ENCODE measurements at regions of chr3 and their contacts with region 1.

Region 1: DNA sequence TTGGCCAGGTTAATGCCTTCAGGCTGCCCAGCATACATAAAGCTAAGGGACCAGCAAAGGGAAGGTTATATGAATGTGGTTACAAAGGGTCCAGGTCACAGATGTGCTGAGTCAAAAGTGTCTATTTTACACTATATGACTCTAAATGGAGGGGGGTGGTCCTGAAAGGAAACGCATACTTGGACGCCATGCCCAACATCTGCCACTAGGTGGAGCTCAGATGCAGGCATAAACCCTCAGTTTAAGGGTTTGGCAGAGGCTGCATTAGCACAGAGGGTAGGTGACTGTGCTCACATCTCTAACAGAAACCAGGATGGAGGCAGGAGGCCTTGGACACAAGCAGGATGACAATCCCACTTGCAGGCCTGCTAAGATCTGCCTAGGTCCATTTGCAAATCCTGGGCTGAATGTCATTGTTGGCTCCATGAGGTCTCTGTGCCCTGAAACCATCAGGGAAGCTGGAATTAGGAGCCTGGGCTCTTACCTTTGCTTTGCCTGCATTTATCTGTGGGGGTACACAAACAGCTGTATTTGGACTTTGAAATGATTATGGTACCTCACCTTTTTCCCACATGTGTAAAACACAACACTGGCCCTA is 55.8 kb downstream of the ZNF621 start:
- DNase-seq: peak; percentile 31 to 57
- ATAC-seq: peak; percentile 82 to 88
- H3K4me3 ChIP-seq: no peak overlapping the region
- H3K27ac ChIP-seq: no peak overlapping the region
- H3K4me1 ChIP-seq: no peaks in the 10 kb centered on the region
- CTCF ChIP-seq: peak; percentile 80
- EP300 ChIP-seq: no peak
- POLR2A ChIP-seq: no peak
- RAD21 ChIP-seq: peak; percentile 85 to 92

Region 2: GRCh38 chr3:40566694-40567093 is 13.9 kb before region 1 on chr3:
- CTCF ChIA-PET with region 1: interaction called, 14 read pairs
- POLR2A ChIA-PET with region 1: no interaction called
- DNase-seq: no peak
- ATAC-seq: no peak
- H3K4me3 ChIP-seq: no peak overlapping the region
- H3K27ac ChIP-seq: no peak overlapping the region
- H3K4me1 ChIP-seq: no peaks in the 10 kb centered on the region
- CTCF ChIP-seq: no peak
- EP300 ChIP-seq: no peak
- POLR2A ChIP-seq: no peak
- RAD21 ChIP-seq: no peak

Region 3: GRCh38 chr3:40597441-40597840 is 16.8 kb after region 1 on chr3:
- CTCF ChIA-PET with region 1: interaction called, 13 read pairs
- POLR2A ChIA-PET with region 1: no interaction called
- DNase-seq: no peak
- ATAC-seq: no peak
- H3K4me3 ChIP-seq: no peak overlapping the region
- H3K27ac ChIP-seq: no peak overlapping the region
- H3K4me1 ChIP-seq: no peaks in the 10 kb centered on the region
- CTCF ChIP-seq: no peak
- EP300 ChIP-seq: no peak
- POLR2A ChIP-seq: no peak
- RAD21 ChIP-seq: no peak

Region 4: DNA sequence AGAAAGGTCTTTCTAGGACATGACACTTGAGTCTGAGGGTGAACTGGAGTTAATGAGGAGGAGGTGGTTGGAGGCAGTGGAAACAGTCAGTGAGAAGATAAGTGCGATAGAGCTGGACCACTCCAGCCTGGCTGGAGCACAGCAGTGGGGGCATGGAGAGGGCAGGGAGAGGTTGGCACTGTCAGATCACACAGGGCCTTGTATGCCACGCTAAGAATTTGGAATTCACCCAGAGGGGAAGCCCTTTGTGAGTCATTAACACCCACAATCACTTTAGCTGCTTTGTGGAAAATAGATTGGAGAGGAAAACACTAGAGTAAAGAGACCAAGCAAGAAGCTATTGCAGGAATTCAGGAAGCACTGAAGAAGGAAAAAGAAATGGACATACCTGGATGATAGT is 27.5 kb after region 1 on chr3:
- CTCF ChIA-PET with region 1: interaction called, 13 read pairs
- POLR2A ChIA-PET with region 1: no interaction called
- DNase-seq: no peak
- ATAC-seq: no peak
- H3K4me3 ChIP-seq: no peak overlapping the region
- H3K27ac ChIP-seq: no peak overlapping the region
- H3K4me1 ChIP-seq: no peaks in the 10 kb centered on the region
- CTCF ChIP-seq: no peak
- EP300 ChIP-seq: no peak
- POLR2A ChIP-seq: no peak
- RAD21 ChIP-seq: no peak

Region 5: DNA sequence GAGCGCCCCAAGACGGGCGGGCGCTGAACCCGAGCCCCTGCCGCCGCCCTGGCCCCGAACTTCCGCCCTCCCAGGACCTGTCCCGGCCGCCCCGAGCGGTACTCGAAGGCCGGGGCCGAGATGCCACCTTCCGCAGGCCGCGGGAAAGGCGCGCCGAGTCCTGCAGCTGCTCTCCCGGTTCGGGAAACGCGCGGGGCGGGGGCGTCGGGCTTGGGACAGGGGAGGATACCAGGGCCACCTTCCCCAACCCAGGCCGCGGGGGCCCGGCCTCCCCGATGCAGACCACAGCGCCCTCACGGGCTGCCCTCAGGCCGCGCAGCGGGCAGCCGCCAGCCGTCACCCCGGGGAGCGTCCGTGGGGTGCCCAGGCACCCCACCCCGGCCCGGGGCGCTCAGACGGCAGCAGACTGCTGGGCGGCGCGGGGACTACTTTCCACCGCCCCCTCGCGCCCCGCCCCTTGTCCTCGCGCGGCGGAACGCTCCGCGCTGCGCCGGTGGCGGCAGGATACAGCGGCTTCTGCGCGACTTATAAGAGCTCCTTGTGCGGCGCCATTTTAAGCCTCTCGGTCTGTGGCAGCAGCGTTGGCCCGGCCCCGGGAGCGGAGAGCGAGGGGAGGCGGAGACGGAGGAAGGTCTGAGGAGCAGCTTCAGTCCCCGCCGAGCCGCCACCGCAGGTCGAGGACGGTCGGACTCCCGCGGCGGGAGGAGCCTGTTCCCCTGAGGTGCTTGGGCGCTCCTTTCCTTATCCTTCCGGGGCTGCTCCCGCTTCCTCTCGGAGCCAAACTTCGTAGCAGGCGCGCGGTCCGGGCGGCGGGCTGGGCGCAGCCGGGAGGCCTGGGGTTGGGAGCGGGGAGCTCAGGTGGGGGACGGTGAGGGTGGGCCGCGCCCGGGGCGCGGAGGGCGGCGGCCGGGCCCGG is 618.6 kb after region 1 on chr3 and contains the start of gene CTNNB1:
- CTCF ChIA-PET with region 1: interaction called, 10 read pairs
- POLR2A ChIA-PET with region 1: interaction called, 6 read pairs
- DNase-seq: peak; percentile 33 to 94
- ATAC-seq: peak; percentile 81 to 89
- H3K4me3 ChIP-seq: peak within 1 kb of the TSS; percentile 95
- H3K27ac ChIP-seq: peak within 1 kb of the TSS; percentile 98 to 100
- H3K4me1 ChIP-seq: peaks cover 26% of the 10 kb centered on the region
- CTCF ChIP-seq: no peak
- EP300 ChIP-seq: peak in 1 of 2 experiments; percentile 6; a peak in 1 of 5 replicates
- POLR2A ChIP-seq: peak; percentile 84
- RAD21 ChIP-seq: peak; percentile 1 to 12; a peak in 2 of 5 replicates
- polyA plus RNA-seq, gene CTNNB1: 242 and 389 TPM in 2 replicates

Region 6: DNA sequence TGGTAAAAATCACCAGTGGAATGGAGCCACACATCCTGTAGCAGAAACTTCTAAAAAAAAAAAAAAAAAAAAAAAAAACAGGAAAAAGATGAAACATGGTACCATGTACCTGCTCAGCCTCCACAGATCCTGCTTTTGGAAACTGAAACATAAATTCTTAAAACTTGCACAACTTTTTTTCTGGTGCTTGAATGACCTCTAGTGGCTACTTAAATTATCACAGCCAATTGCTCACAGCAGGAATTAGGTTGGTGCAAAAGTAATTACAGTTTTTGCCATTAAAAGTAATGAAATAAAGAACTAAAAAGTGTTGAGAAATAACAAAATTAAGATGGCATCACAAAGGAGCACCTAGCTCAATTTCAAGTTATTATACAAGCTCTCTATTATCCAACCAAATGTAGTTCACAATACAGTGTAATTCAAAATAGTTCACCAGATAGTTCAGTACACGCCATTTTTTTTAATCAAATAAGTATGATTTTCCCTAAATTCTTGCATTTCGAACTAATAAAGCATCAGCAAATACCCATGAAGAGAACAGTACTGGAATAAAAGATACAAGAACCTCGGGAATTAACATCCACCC is 1300.7 kb after region 1 on chr3:
- CTCF ChIA-PET with region 1: interaction called, 86 read pairs
- POLR2A ChIA-PET with region 1: no interaction called
- DNase-seq: peak in 1 of 2 experiments; percentile 33
- ATAC-seq: no peak
- H3K4me3 ChIP-seq: no peak overlapping the region
- H3K27ac ChIP-seq: no peak overlapping the region
- H3K4me1 ChIP-seq: no peaks in the 10 kb centered on the region
- CTCF ChIP-seq: peak; percentile 65
- EP300 ChIP-seq: no peak
- POLR2A ChIP-seq: no peak
- RAD21 ChIP-seq: peak; percentile 71 to 79